ENCODE measurements at regions of chr20 and their contacts with region 1.

Region 1: DNA sequence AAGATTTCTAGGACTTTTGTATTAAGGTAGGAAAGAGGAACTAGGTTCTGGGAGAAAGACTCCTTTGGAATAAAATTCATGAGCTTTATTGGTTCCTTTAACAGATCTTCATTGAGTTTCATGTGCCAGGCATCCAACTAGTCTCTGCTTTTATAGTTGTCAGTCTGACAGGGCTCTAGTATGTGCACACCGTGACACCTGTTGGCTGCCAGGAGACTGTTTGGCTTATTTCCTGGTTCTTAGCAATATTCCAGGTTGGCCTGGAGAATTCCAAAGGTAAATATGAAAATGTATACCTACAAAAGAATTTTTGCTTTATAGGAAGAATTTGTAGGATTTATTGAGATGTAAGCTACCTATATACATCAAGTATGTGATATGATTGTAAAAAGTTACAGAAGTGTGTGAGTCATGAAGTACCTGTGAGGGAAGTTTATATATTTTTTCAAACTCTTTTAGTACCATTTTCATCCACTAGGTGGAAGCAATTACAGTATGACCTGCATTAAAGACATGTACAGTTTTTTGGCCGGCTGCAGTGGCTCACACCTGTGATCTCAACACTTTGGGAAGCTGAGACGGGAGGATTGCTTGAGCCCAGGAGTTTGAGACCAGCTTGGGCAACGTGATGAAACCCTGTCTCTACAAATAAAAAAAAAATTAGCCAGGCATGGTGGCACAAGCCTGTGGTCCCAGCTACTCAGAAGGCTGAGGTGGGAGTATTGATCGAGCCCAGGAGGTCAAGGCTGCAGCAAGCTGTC is 35.2 kb downstream of the NDUFAF5 start:
- DNase-seq: peak in 1 of 2 donors; percentile 30
- H3K4me3 ChIP-seq: no peak overlapping the region
- H3K27ac ChIP-seq: peak overlapping the region in 1 of 2 donors; percentile 37
- H3K4me1 ChIP-seq: no peaks in the 10 kb centered on the region
- H3K27me3 ChIP-seq: no peaks in the 10 kb centered on the region
- CTCF ChIP-seq: peak; percentile 47 to 78 (median 69)
- POLR2A ChIP-seq: no peak

Region 2: DNA sequence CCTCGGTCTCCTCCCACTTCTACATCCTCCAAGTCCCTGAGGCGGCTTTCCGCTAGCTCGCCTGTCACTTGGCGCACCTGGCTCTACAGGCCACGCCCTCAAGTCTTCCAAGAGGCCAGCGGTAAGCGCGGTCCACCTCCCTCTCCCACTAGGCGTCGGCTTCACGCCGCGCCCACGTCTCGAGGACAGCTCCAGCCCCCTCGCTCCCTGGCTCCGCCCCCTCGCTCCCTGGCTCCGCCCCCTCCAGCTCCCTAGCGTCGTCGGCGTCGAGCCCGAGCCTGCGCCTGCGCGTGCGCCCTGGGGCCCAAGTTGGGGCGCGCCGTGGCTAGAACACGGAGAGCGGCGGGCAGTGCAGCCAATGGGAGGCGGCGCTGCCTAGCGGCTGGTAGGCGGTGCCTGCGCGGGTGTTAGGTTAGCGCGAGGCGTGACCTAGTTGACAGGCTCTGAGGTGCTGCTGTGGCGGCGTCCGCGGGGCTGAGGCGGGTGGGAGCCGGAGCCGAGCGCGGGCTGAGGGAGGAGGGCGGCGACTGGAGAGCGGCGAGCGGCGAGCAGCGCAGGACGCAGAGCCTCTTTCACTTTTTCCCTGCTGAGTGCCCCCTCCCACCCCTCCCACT is 175.1 kb after region 1 on chr20 and contains the start of gene MACROD2:
- intact Hi-C with region 1: no loop called
- DNase-seq: peak; percentile 90 to 94
- H3K4me3 ChIP-seq: peak within 1 kb of the TSS; percentile 65 to 83 (median 79)
- H3K27ac ChIP-seq: peak within 1 kb of the TSS; percentile 72 to 80
- H3K4me1 ChIP-seq: no peaks in the 10 kb centered on the region
- H3K27me3 ChIP-seq: no peaks in the 10 kb centered on the region
- CTCF ChIP-seq: peak in 1 of 3 donors; percentile 10
- POLR2A ChIP-seq: no peak
- total RNA-seq, gene MACROD2: 6.7 to 26.8 (median 8.8) TPM

Region 3: DNA sequence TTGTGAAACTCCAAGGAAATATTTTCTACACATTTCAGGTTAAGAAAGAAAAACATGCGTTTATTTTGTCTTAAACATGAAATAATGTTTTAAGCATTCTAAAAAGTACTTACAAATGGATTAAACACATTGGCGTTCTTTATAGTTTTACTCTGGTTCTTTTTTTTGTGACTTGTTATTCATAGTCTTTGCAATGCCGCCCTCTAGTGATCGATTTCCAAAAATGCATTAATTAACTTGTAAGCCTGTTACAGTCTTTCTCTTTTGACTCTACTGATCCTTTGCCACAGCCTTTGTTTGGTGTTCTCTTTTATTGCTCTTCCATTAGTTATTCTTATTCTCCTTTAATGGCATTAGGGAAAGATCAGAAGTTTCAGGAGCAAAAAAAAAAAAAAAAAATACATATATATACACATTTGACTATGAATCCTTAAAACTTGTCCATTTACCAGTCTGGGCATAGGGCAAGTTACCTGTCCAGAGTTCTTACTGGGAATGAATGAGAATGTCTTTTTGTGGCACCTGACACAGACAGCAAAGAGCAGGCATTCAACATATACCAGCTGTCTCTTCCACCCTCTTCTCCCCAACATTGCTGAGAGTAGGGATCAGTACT is 235.2 kb after region 1 on chr20:
- intact Hi-C with region 1: loop called (anchors 10 kb)
- DNase-seq: no peak
- H3K4me3 ChIP-seq: no peak overlapping the region
- H3K27ac ChIP-seq: no peak overlapping the region
- H3K4me1 ChIP-seq: no peaks in the 10 kb centered on the region
- H3K27me3 ChIP-seq: no peaks in the 10 kb centered on the region
- CTCF ChIP-seq: peak; percentile 23 to 72 (median 56)
- POLR2A ChIP-seq: no peak

Region 4: GRCh38 chr20:14179356-14179755 is 359.3 kb after region 1 on chr20:
- intact Hi-C with region 1: no loop called
- DNase-seq: no peak
- H3K4me3 ChIP-seq: no peak overlapping the region
- H3K27ac ChIP-seq: no peak overlapping the region
- H3K4me1 ChIP-seq: no peaks in the 10 kb centered on the region
- H3K27me3 ChIP-seq: no peaks in the 10 kb centered on the region
- CTCF ChIP-seq: no peak
- POLR2A ChIP-seq: no peak

Region 5: GRCh38 chr20:15515691-15516090 is 1695.6 kb after region 1 on chr20:
- intact Hi-C with region 1: loop called (anchors 5 kb)
- DNase-seq: no peak
- H3K4me3 ChIP-seq: no peak overlapping the region
- H3K27ac ChIP-seq: no peak overlapping the region
- H3K4me1 ChIP-seq: no peaks in the 10 kb centered on the region
- H3K27me3 ChIP-seq: no peaks in the 10 kb centered on the region
- CTCF ChIP-seq: no peak
- POLR2A ChIP-seq: no peak

Measured in breast epithelium (tissue), 4 donors.